AG04449 (cell line): ENCODE measurements at regions of chr17 and their contacts with region 1.

Region 1: DNA sequence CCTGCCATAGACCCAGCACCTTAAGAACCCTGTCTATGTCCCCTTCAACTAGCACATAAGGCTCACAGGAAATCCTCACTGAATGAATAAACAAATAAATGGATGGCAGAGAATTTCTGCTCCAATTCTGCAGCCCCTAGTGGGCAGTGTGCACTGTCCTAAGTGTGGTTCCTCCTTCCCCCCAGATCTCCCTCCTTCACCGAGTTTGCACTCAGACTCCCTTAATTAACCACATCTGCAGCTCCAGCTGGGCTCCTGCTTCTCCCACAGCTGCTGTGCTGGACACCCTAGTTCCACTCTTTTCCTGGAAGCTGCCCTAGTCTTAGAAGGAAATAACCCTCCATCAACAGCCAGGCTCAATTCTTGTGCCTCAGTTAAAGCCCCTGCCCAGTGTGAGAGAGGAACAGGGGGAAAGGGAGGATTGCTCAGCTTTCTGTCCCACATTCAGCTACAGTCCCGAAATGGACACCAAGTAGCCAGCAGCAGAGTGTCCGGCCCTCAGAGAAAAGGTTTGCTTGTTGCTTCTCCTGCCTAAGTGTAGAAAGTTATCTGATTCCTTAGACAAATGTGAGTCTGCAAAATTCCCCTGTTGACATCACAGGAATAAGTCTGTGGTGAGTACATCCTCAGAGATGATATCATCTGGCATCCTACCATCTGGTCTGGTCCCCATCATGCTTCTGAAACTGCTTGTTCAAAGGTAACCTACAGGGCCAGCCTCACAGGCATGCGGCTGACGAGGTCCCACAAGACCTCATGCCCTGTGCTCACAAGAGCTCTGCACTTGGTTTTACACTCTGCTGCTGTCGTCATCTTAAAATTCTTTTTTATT is 12.3 kb downstream of the LRRC3C start:
- DNase-seq: peak; percentile 57
- H3K4me3 ChIP-seq: no peak overlapping the region
- CTCF ChIP-seq: peak; percentile 64

Region 2: DNA sequence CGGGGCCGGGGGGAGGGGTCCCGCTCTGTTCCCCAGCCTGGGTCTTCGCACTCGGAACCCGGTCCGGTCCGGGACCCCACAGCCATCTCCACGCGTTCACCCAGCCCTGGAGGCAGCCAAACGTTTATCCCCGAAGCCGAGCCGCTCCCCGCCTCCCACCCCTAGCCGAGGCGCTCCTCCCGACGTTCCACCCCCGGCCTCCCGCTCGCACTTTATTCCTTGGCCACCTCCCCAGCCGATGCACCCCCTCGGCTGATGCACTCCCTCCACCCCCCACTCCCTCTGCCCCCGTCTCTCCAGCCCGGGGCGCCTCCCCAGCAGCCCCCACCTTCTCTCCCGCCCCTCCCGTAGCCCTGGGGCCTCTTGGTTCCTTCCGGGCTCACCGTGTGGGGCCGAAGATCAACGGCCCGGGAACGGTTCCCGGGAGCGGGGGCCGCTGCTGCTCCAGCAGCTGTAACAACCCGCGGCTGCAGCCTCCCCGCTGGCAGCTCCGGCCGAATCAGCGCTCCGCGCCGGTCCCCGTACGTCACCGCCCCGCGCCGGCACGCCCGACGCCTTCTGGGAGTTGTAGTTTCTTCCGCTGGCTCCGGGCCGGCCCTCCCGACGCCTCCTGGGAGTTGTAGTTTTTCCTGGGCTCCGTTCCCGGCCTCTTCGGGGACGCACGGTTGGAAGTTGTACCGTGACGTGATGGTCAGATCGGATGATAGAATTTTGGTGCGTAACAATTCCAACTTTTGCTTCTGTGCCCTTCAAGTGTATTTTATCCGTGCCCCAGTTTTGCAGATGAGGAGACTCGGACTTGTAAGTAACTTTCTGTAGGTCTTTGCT is 12.5 kb before region 1 on chr17 and contains the starts of genes LRRC3C and ORMDL3:
- CTCF ChIA-PET with region 1: interaction called, 16 read pairs
- POLR2A ChIA-PET with region 1: interaction called, 4 read pairs
- DNase-seq: peak; percentile 41
- H3K4me3 ChIP-seq: peak within 1 kb of the TSS; percentile 82
- CTCF ChIP-seq: no peak

Region 3: GRCh38 chr17:39960524-39961041 is 20.8 kb after region 1 on chr17:
- CTCF ChIA-PET with region 1: interaction called, 26 read pairs
- POLR2A ChIA-PET with region 1: no interaction called
- DNase-seq: no peak
- H3K4me3 ChIP-seq: no peak overlapping the region
- CTCF ChIP-seq: no peak

Region 4: DNA sequence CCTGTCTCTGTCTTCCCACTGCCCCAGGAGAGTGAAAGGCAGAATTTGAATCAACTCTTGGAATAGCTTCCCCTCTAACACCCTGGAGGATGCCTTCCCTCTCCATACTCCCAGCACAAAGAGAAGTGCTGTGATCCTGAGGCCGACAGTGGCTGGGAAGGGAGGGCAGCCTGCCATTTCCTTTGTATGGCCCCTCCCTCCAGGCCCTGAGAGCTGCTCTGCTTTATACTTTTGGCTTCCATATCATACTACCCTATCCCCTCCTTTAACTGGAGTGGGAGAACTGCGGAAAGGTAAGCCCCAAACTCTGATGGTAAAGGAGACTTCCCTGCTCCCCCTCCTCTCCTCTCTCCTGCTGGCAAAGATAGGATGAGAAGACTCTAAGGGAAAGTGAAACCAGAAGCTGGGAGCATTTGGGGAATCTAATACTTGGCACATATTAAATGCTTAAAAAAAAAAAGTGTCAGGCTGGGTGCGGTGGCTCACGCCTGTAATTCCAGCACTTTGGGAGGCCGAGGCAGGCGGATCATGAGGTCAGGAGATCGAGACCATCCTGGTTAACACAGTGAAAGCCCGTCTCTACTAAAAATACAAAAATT is 118.5 kb after region 1 on chr17:
- CTCF ChIA-PET with region 1: no interaction called
- POLR2A ChIA-PET with region 1: no interaction called
- DNase-seq: no peak
- H3K4me3 ChIP-seq: no peak overlapping the region
- CTCF ChIP-seq: no peak